GM12878 (cell line): ENCODE measurements at regions of chr9 and their contacts with region 1.

Region 1: GRCh38 chr9:738209-738915 is 103.1 kb upstream of the DMRT1 start:
- DNase-seq: no peak
- ATAC-seq: no peak
- H3K4me3 ChIP-seq: no peak overlapping the region
- H3K27ac ChIP-seq: no peak overlapping the region
- H3K4me1 ChIP-seq: no peaks in the 10 kb centered on the region
- H3K27me3 ChIP-seq: no peaks in the 10 kb centered on the region; a peak in 2 of 4 replicates
- CTCF ChIP-seq: no peak
- EP300 ChIP-seq: no peak
- POLR2A ChIP-seq: no peak
- RAD21 ChIP-seq: no peak

Region 2: GRCh38 chr9:677461-678097 is 60.8 kb before region 1 on chr9:
- CTCF ChIA-PET with region 1: no interaction called
- POLR2A ChIA-PET with region 1: no interaction called
- RAD21 ChIA-PET with region 1: no interaction called
- SMC1A ChIA-PET with region 1: no interaction called
- in situ Hi-C with region 1: no loop called
- intact Hi-C with region 1: loop called (anchors 10 kb)
- DNase-seq: no peak
- ATAC-seq: no peak; the same call in 1 of the 3 replicates
- H3K4me3 ChIP-seq: no peak overlapping the region
- H3K27ac ChIP-seq: no peak overlapping the region
- H3K4me1 ChIP-seq: no peaks in the 10 kb centered on the region
- H3K27me3 ChIP-seq: no peaks in the 10 kb centered on the region; a peak in 1 of 4 replicates
- CTCF ChIP-seq: no peak
- EP300 ChIP-seq: no peak
- POLR2A ChIP-seq: no peak
- RAD21 ChIP-seq: no peak

Region 3: DNA sequence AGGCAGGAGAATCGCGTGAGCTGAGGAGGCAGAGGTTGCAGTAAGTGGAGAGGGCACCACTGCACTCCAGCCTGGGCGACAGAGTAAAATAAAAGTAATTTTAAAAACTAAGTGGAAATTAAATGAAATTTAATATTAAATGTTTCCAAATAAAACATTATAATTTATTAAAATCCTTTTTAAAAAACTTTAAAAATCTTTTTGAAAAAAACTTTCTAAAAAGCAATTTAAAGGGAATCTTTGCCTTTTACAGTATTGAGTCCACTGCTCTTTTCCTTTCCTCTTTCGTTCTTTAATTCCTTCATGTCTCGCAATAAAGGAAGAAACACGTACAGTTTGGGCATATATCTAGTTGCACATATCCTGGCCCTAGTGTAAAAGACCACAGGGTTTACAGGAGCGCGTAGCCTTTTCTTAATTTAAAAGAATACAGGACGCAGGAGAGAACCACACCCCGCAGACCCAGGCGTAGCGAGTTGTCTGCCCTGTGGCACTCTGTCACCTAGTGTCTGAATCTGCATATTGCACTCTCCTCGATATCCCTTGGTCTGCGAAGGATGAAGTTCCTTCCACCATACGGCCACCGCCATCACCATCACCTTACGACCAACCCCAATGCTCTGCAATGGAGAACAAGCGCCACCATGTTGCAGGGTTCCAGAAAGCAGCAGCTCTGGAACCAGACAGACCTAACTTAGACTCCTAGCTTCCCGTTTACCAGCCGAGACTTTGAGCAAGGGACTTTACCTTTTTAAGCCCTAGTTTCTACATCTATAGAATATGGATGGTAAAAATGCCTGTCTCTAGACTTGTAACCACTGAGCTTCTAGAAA is 25.5 kb after region 1 on chr9:
- CTCF ChIA-PET with region 1: no interaction called
- POLR2A ChIA-PET with region 1: no interaction called
- RAD21 ChIA-PET with region 1: no interaction called
- SMC1A ChIA-PET with region 1: no interaction called
- in situ Hi-C with region 1: no loop called
- intact Hi-C with region 1: no loop called
- DNase-seq: no peak
- ATAC-seq: peak; percentile 98
- H3K4me3 ChIP-seq: no peak overlapping the region
- H3K27ac ChIP-seq: no peak overlapping the region
- H3K4me1 ChIP-seq: no peaks in the 10 kb centered on the region
- H3K27me3 ChIP-seq: peaks cover 0 to 1% of the 10 kb centered on the region in 2 experiments; a peak in 2 of 4 replicates
- CTCF ChIP-seq: peak; percentile 40 to 58 (median 50)
- EP300 ChIP-seq: no peak
- POLR2A ChIP-seq: no peak
- RAD21 ChIP-seq: peak; percentile 19